ENCODE measurements at regions of chr16 and their contacts with region 1.

Region 1: DNA sequence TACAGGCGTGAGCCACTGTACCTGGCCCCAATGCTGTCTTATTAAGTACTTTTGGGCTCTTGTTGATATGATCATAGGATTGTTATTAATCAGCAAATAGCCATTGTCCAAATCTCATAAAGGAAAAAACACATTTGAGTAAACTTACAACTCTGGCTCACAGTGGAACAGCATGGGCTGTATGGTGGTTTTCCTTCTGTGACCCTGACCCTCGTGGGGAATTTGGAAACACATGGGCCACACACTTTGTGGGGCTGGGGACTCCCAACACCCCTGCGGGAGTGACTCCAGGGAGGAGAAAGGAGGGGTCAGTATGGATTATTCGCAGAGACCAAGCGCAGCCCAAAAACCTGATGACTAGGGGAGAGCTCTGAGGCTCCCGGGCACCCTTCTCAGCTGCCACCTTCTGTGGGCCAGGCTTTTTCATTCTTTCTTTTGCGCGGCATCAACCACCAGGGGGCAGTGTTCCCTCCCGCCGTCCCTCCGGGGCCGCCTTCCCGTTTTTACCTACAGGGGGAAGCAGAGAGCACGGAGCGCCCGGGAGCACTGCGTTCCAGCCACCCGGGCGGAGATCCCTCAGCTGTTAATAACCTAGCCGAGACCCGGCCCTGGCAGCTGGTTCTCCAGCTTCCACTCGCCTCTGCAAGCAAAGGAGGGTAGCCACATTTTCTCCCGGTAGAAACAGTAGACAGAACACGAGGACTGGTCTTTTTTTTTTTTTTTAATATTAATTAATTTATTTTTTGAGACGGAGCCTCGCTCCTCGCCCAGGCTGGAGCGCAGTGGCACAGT is 9.7 kb downstream of the TSNAXIP1 start:
- DNase-seq: peak; percentile 81 to 91 (median 91)
- H3K4me3 ChIP-seq: no peak overlapping the region
- H3K27ac ChIP-seq: no peak overlapping the region
- H3K4me1 ChIP-seq: no peaks in the 10 kb centered on the region
- H3K27me3 ChIP-seq: no peaks in the 10 kb centered on the region

Region 2: DNA sequence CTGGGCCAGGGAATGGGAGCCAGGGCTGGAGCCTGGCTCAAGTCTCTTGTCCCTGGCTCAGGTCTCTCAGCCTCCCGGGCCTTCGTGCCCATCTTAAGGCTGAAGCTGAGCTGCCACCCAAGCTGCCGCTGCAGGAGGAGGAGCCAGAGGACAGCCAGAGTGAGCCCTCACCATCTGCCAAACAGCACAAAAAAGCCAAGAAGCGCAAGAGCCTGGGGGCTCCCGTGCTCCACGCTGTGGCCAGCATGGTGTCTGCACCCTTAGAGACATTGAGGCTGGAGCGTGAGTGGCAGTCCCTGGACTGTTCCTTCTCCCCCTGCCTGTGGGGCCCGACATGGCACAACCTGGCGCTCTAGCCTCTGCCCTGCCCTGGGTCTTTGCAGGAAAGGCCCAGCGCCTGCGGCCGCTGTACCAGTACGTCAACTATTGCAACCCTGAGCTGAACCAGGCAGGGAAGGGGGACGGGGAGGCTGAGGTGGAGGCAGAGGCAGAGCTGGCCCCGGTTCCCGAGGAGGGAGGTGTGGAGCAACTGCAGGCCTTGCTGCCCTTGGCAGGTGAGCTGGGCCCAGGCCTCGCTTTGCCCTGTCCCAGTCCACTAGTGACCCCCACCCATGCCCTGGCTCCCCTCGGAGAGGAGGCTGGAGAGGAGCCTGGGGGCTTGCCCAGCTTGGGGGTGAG is 148.5 kb before region 1 on chr16:
- CTCF ChIA-PET with region 1: interaction called, 24 read pairs
- POLR2A ChIA-PET with region 1: no interaction called
- DNase-seq: peak; percentile 95 to 97 (median 97)
- H3K4me3 ChIP-seq: peak overlapping the region in 5 of 7 experiments; percentile 71 to 90 (median 81)
- H3K27ac ChIP-seq: peak overlapping the region in 1 of 2 experiments; percentile 45
- H3K4me1 ChIP-seq: peaks cover 2 to 40% (median 33%) of the 10 kb centered on the region in 4 experiments
- H3K27me3 ChIP-seq: no peaks in the 10 kb centered on the region

Region 3: GRCh38 chr16:67685388-67686112 is 130.9 kb before region 1 on chr16:
- CTCF ChIA-PET with region 1: interaction called, 11 read pairs
- POLR2A ChIA-PET with region 1: no interaction called
- DNase-seq: no peak
- H3K4me3 ChIP-seq: no peak overlapping the region
- H3K27ac ChIP-seq: no peak overlapping the region
- H3K4me1 ChIP-seq: no peaks in the 10 kb centered on the region
- H3K27me3 ChIP-seq: no peaks in the 10 kb centered on the region

Region 4: GRCh38 chr16:67833418-67834241 is 17.2 kb after region 1 on chr16:
- CTCF ChIA-PET with region 1: interaction called, 19 read pairs
- POLR2A ChIA-PET with region 1: no interaction called
- DNase-seq: peak; percentile 81 to 93 (median 91)
- H3K4me3 ChIP-seq: peak overlapping the region; percentile 60 to 83 (median 74)
- H3K27ac ChIP-seq: peak overlapping the region in 1 of 2 experiments; percentile 81
- H3K4me1 ChIP-seq: peaks cover 3 to 18% (median 15%) of the 10 kb centered on the region in 4 experiments
- H3K27me3 ChIP-seq: no peaks in the 10 kb centered on the region

Region 5: DNA sequence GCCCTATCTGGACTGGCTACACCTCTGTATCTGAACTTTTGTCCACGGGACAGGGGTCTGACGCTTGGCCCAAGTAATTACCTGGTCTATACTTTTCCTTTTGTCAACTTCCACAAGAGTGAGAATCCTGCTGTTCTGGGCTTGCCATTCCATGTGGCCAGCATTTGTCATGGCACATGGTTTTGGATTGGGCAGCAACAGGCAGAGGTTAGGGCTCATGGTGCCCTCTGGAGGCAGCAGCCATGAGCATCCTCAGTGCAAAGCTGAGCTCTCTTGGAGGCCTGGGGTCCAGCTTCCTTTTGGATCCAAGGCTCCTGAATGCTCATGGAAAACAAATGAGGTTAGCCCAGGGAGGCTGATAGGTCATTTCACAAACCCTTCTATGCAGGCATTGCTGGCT is 48.9 kb after region 1 on chr16:
- CTCF ChIA-PET with region 1: interaction called, 36 read pairs
- POLR2A ChIA-PET with region 1: no interaction called
- DNase-seq: peak; percentile 47 to 73 (median 69)
- H3K4me3 ChIP-seq: no peak overlapping the region
- H3K27ac ChIP-seq: no peak overlapping the region
- H3K4me1 ChIP-seq: no peaks in the 10 kb centered on the region
- H3K27me3 ChIP-seq: no peaks in the 10 kb centered on the region

Region 6: DNA sequence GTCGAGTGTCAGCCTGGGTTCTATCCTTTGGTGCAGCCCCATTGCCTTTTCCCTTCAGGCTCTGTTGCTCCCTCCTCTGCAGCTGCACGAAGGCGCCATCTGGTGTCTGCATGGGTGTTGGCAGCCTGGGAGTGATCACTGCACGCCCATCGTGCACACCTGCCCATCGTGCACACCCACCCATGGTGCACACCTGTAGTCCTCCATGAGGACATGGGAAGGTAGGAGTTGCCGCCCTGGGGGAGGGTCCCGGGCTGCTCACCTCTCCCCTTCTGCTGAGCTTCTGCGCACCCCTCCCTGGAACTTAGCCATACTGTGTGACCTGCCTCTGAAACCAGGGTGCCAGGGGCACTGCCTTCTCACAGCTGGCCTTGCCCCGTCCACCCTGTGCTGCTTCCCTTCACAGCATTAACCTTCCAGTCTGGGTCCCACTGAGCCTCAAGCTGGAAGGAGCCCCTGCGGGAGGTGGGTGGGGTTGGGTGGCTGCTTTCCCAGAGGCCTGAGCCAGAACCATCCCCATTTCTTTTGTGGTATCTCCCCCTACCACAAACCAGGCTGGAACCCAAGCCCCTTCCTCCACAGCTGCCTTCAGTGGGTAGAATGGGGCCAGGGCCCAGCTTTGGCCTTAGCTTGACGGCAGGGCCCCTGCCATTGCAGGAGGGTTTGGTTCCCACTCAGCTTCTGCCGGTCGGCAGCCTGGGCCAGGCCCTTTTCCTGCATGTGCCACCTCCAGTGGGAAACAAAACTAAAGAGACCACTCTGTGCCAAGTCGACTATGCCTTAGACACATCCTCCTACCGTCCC is 112.3 kb after region 1 on chr16:
- CTCF ChIA-PET with region 1: interaction called, 25 read pairs
- POLR2A ChIA-PET with region 1: no interaction called
- DNase-seq: peak; percentile 56 to 77 (median 69)
- H3K4me3 ChIP-seq: no peak overlapping the region
- H3K27ac ChIP-seq: no peak overlapping the region
- H3K4me1 ChIP-seq: no peaks in the 10 kb centered on the region
- H3K27me3 ChIP-seq: no peaks in the 10 kb centered on the region

Measured in common myeloid progenitor, CD34-positive (primary cell).